Spleen (tissue), 13 donors: ENCODE measurements at regions of chr5 and their contacts with region 1.

Region 1: DNA sequence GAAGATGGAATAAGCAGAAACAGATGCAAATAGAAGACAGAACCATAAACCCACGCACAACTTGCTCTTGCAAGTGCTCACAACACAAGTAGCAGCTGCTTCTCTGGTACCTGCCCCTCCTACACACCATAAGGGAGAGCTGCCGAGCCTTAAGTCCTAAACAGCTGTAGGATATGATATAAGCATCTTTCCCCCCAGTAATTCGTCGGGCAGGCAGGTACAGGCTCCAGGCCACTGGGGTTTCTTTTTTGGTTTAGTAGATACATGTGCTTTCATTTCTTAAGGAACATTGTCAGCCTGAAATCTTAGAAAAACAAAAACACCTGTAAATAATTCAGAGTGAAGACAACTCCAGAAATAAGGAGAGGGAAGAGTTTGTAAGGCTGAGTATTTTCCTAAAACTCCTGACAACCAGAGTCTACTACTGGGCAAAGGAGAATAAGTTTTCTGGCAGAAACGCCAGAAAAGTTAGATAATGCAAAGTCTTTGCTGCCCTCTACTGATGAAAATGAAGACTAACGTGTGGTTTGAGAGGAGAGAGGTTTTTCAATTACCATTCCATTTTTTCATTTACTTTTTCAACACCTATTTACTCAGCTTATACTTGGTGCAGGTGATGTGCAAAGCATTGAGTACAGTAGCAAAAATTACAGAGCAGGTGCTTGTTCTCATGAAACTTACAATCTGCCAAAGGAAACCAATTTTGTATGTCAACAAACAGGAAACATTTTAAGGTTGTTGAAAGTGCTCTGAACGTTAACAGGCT is 20.1 kb upstream of the TCERG1 start:
- DNase-seq: no peak
- H3K4me3 ChIP-seq: no peak overlapping the region
- H3K27ac ChIP-seq: no peak overlapping the region
- H3K4me1 ChIP-seq: peaks cover 0 to 5% (median 0%) of the 10 kb centered on the region in 6 donors
- H3K27me3 ChIP-seq: peaks cover 0 to 19% (median 0%) of the 10 kb centered on the region in 7 donors
- CTCF ChIP-seq: peak; percentile 29 to 77 (median 60)
- POLR2A ChIP-seq: no peak

Region 2: DNA sequence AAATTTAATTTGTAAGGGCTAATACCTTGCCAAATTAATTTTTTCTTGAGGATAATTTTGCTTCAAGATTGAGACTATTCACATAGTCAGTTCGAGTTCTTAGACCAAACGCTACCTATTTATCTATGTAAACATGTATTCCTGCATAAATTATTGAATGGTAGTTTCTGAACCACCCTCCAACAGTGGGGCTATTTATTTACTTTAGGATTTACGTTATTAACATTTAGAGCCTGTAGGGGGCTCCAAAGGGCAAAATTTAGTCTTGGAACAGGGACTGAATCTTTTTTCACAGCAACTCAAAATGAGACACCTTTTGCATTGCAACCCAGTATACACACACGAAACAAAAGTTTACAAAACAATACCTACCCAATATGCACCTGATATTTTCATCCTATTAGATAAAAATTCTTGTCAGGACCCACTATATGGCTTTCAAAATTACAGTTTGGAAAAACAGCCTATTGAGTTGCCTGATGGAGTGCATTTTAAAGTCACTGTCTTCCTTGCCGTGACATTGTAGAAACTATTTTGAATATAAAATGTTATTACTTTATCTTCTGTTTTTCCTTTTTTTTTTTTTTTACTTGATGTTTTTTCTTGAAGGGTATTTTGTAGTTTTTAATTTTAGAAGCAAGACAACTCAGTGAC is 135.5 kb before region 1 on chr5:
- intact Hi-C with region 1: loop called (anchors 5 kb)
- DNase-seq: no peak
- H3K4me3 ChIP-seq: no peak overlapping the region
- H3K27ac ChIP-seq: no peak overlapping the region
- H3K4me1 ChIP-seq: no peaks in the 10 kb centered on the region
- H3K27me3 ChIP-seq: no peaks in the 10 kb centered on the region
- CTCF ChIP-seq: peak in 8 of 11 experiments; percentile 22 to 62 (median 60)
- POLR2A ChIP-seq: no peak